K562 (cell line): ENCODE measurements at regions of chr22 and their contacts with region 1.

Region 1: GRCh38 chr22:20852076-20852475 is 6.5 kb downstream of the PI4KA start:
- DNase-seq: peak; percentile 50 to 66 (median 58)
- ATAC-seq: peak; percentile 59
- H3K4me3 ChIP-seq: no peak overlapping the region
- H3K27ac ChIP-seq: 0 out of 3 replicates have a peak overlapping the region, but pooled peaks have one; percentile 0
- H3K4me1 ChIP-seq: peaks cover 40 to 46% of the 10 kb centered on the region in 2 experiments
- H3K27me3 ChIP-seq: no peaks in the 10 kb centered on the region
- CTCF ChIP-seq: peak in 2 of 3 experiments; percentile 43 to 64; a peak in 3 of 6 replicates
- EP300 ChIP-seq: peak; percentile 65; the same call in 1 of the 2 replicates
- POLR2A ChIP-seq: no peak
- RAD21 ChIP-seq: no peak

Region 2: GRCh38 chr22:20823264-20823663 is 28.8 kb before region 1 on chr22:
- CTCF ChIA-PET with region 1: interaction called, 3 read pairs
- POLR2A ChIA-PET with region 1: interaction called, 10 read pairs
- in situ Hi-C with region 1: no loop called
- intact Hi-C with region 1: no loop called
- DNase-seq: no peak
- ATAC-seq: no peak
- H3K4me3 ChIP-seq: no peak overlapping the region
- H3K27ac ChIP-seq: no peak overlapping the region
- H3K4me1 ChIP-seq: no peaks in the 10 kb centered on the region
- H3K27me3 ChIP-seq: no peaks in the 10 kb centered on the region
- CTCF ChIP-seq: no peak
- EP300 ChIP-seq: no peak
- POLR2A ChIP-seq: no peak
- RAD21 ChIP-seq: peak in 1 of 2 experiments; percentile 15; a peak in 1 of 4 replicates

Region 3: GRCh38 chr22:20840646-20841371 is 11.3 kb before region 1 on chr22:
- CTCF ChIA-PET with region 1: no interaction called
- POLR2A ChIA-PET with region 1: interaction called, 37 read pairs
- in situ Hi-C with region 1: no loop called
- intact Hi-C with region 1: loop called (anchors 2 kb)
- DNase-seq: peak in 3 of 4 experiments; percentile 43 to 78 (median 51)
- ATAC-seq: peak; percentile 46
- H3K4me3 ChIP-seq: no peak overlapping the region
- H3K27ac ChIP-seq: no peak overlapping the region
- H3K4me1 ChIP-seq: peaks cover 17 to 33% of the 10 kb centered on the region in 2 experiments
- H3K27me3 ChIP-seq: no peaks in the 10 kb centered on the region; a peak in 1 of 5 replicates
- CTCF ChIP-seq: no peak
- EP300 ChIP-seq: no peak
- POLR2A ChIP-seq: no peak
- RAD21 ChIP-seq: no peak